ENCODE measurements at regions of chr10 and their contacts with region 1.

Region 1: GRCh38 chr10:89369156-89370105 is 8.4 kb upstream of the IFIT1B start:
- DNase-seq: no peak
- ATAC-seq: peak; percentile 57
- H3K4me3 ChIP-seq: no peak overlapping the region
- H3K27ac ChIP-seq: peak overlapping the region; percentile 10; the same call in 1 of the 2 replicates
- H3K4me1 ChIP-seq: peaks cover 25% of the 10 kb centered on the region
- H3K27me3 ChIP-seq: no peaks in the 10 kb centered on the region
- CTCF ChIP-seq: peak; percentile 48 to 66 (median 53); a peak in 5 of 6 replicates
- EP300 ChIP-seq: no peak
- POLR2A ChIP-seq: no peak
- RAD21 ChIP-seq: peak; percentile 76

Region 2: DNA sequence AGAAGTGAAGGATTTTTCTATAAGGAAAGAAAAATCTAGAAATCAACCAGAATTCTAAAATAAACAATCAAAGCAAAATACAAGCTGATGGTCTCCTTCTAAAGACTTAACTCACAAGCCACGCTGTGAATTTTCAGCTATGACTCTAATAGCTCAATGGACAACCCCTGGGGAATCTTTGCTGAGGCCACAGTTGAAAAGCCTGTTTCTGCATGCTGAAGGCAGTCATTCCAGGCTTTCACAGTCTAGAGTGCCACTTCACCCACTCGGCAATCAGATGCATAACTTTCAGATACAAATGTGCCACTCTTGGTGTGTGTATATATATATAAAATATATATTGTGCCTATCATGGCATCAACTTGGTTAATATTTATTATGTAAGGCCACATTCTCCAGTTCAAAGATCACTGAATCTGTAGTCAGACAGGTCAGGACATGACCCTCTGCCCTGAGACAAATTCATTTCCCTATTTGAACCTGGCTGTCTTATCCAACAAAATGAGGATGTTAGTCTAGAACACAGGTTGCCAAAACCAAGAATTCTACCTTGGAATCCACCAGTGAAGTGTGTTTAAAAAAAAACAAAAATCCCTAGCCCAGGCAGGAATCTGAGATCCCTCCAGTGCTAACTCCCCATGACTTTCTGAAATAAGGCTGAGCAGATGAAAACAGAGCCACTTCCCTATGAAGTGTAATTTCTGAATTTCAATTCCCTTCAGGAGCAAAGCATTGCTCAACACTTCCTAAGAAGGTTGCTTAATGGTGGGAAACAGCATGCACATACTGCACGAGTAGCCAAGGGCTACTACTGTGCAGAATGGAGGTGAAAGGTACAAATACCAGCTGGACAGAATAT is 127.7 kb before region 1 on chr10:
- CTCF ChIA-PET with region 1: interaction called, 15 read pairs
- POLR2A ChIA-PET with region 1: no interaction called
- RAD21 ChIA-PET with region 1: interaction called, 9 read pairs
- SMC1A ChIA-PET with region 1: interaction called, 12 read pairs
- in situ Hi-C with region 1: no loop called
- intact Hi-C with region 1: no loop called
- DNase-seq: no peak
- ATAC-seq: peak; percentile 71
- H3K4me3 ChIP-seq: no peak overlapping the region
- H3K27ac ChIP-seq: peak overlapping the region; percentile 62
- H3K4me1 ChIP-seq: peaks cover 43% of the 10 kb centered on the region
- H3K27me3 ChIP-seq: no peaks in the 10 kb centered on the region
- CTCF ChIP-seq: no peak
- EP300 ChIP-seq: no peak
- POLR2A ChIP-seq: no peak
- RAD21 ChIP-seq: no peak

Region 3: GRCh38 chr10:89283936-89284475 is 85.4 kb before region 1 on chr10:
- CTCF ChIA-PET with region 1: interaction called, 10 read pairs
- POLR2A ChIA-PET with region 1: no interaction called
- RAD21 ChIA-PET with region 1: interaction called, 5 read pairs
- SMC1A ChIA-PET with region 1: interaction called, 4 read pairs
- in situ Hi-C with region 1: no loop called
- intact Hi-C with region 1: no loop called
- DNase-seq: no peak
- ATAC-seq: no peak
- H3K4me3 ChIP-seq: no peak overlapping the region
- H3K27ac ChIP-seq: no peak overlapping the region
- H3K4me1 ChIP-seq: no peaks in the 10 kb centered on the region
- H3K27me3 ChIP-seq: no peaks in the 10 kb centered on the region
- CTCF ChIP-seq: no peak
- EP300 ChIP-seq: no peak
- POLR2A ChIP-seq: no peak
- RAD21 ChIP-seq: no peak

Region 4: GRCh38 chr10:89310056-89310893 is 59.2 kb before region 1 on chr10:
- CTCF ChIA-PET with region 1: interaction called, 95 read pairs
- POLR2A ChIA-PET with region 1: no interaction called
- RAD21 ChIA-PET with region 1: interaction called, 68 read pairs
- SMC1A ChIA-PET with region 1: interaction called, 98 read pairs
- in situ Hi-C with region 1: no loop called
- intact Hi-C with region 1: no loop called
- DNase-seq: no peak
- ATAC-seq: peak; percentile 39; the same call in 2 of the 3 replicates
- H3K4me3 ChIP-seq: no peak overlapping the region
- H3K27ac ChIP-seq: no peak overlapping the region
- H3K4me1 ChIP-seq: no peaks in the 10 kb centered on the region
- H3K27me3 ChIP-seq: no peaks in the 10 kb centered on the region
- CTCF ChIP-seq: no peak
- EP300 ChIP-seq: no peak
- POLR2A ChIP-seq: no peak
- RAD21 ChIP-seq: no peak

Region 5: DNA sequence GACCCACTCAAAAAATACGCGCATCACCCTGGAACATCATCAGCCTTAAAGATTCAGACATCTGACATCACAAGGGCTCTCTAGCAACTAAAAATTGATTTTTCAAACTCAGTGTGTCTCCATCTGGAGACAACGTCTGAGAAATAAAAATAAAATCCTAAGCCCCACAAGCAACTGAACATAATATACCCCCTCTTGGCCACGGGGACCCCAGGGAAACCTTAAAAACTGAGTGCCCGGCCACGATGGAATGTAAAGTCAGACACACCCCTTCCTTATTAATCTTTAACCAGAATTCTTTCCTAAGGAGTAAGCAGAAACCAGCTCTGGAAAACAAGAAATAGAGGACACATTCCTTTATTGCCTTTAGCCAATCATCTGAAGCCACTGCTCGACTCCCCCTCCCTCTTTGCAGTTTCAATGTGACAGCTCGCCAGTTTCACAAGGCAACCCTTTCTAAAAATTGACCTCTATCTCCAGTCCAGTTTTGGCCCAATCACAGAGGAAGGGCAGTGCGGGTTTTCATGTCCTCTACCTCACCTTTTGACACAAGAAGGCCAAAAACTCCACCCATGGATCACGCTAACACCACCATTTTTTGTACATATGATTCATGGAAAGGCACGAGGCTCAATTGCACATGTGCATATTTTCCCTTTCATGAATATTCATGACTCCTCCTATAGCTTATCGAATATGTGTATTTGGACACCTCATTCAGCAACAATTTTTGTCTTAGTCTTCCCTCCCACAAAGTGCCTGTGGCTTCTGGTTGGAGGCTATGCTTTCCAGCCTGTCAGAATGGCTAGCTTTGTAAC is 17.4 kb before region 1 on chr10:
- CTCF ChIA-PET with region 1: interaction called, 39 read pairs
- POLR2A ChIA-PET with region 1: interaction called, 4 read pairs
- RAD21 ChIA-PET with region 1: interaction called, 38 read pairs
- SMC1A ChIA-PET with region 1: interaction called, 97 read pairs
- in situ Hi-C with region 1: no loop called
- intact Hi-C with region 1: loop called (anchors 1 kb)
- DNase-seq: no peak
- ATAC-seq: peak; percentile 84
- H3K4me3 ChIP-seq: no peak overlapping the region
- H3K27ac ChIP-seq: peak overlapping the region; percentile 51
- H3K4me1 ChIP-seq: peaks cover 44% of the 10 kb centered on the region
- H3K27me3 ChIP-seq: no peaks in the 10 kb centered on the region
- CTCF ChIP-seq: no peak
- EP300 ChIP-seq: no peak
- POLR2A ChIP-seq: no peak
- RAD21 ChIP-seq: no peak

Region 6: DNA sequence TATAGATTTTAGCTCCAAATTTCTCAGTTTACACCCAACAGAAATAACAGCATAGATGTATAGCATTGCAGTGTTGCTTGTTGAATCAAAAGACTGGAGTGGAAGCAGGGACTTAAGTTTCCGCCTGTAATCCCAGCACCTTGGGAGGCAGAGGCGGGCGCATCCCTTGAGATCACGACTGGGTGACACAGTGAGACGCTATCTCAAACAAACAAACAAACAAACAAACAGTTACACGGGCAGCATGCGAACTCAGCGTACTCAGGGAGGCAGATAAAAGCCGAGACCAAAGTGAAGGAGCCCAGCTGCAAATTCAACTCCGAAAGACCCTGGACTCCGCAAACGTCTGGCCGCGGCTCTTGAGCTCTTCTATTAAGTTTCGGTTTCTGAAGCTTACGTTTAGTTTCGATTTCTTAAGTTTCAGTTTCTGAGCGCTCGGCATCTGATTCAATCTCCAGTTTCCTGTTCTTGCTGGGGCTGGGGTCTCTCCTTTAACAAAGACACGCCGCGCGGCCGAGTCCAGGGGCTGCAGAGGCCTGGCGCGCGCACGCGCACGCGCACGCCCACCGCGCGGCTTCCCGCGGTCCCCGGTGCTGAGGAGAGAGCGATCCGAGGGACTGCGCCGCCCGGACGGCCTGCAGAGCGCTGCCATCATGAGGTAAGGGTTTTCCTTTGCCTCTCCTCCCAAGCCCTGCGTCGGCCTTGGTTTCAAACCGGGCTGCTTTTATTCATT is 44.9 kb after region 1 on chr10 and contains the start of gene IFIT5:
- CTCF ChIA-PET with region 1: interaction called, 24 read pairs
- POLR2A ChIA-PET with region 1: interaction called, 5 read pairs
- RAD21 ChIA-PET with region 1: interaction called, 20 read pairs
- SMC1A ChIA-PET with region 1: interaction called, 32 read pairs
- in situ Hi-C with region 1: no loop called
- intact Hi-C with region 1: no loop called
- DNase-seq: peak; percentile 58
- ATAC-seq: peak; percentile 84
- H3K4me3 ChIP-seq: peak within 1 kb of the TSS; percentile 79
- H3K27ac ChIP-seq: peak within 1 kb of the TSS; percentile 97
- H3K4me1 ChIP-seq: no peaks in the 10 kb centered on the region
- H3K27me3 ChIP-seq: no peaks in the 10 kb centered on the region
- CTCF ChIP-seq: no peak
- EP300 ChIP-seq: no peak
- POLR2A ChIP-seq: peak; percentile 57
- RAD21 ChIP-seq: no peak
- polyA plus RNA-seq, gene IFIT5: 5.9 to 8.3 TPM

Region 7: GRCh38 chr10:91185239-91185875 is 1815.9 kb after region 1 on chr10:
- CTCF ChIA-PET with region 1: no interaction called
- POLR2A ChIA-PET with region 1: no interaction called
- RAD21 ChIA-PET with region 1: no interaction called
- SMC1A ChIA-PET with region 1: no interaction called
- in situ Hi-C with region 1: no loop called
- intact Hi-C with region 1: no loop called
- DNase-seq: no peak
- ATAC-seq: no peak
- H3K4me3 ChIP-seq: no peak overlapping the region
- H3K27ac ChIP-seq: no peak overlapping the region
- H3K4me1 ChIP-seq: peaks cover 7% of the 10 kb centered on the region; the same call in 1 of the 2 replicates
- H3K27me3 ChIP-seq: no peaks in the 10 kb centered on the region
- CTCF ChIP-seq: no peak
- EP300 ChIP-seq: no peak
- POLR2A ChIP-seq: no peak
- RAD21 ChIP-seq: no peak

Measured in GM12878 (cell line).